Endothelial cell of umbilical vein (primary cell): ENCODE measurements at regions of chr11 and their contacts with region 1.

Region 1: GRCh38 chr11:60251485-60252212 is 8.7 kb upstream of the MS4A4E start:
- DNase-seq: peak; percentile 89
- H3K4me3 ChIP-seq: no peak overlapping the region
- H3K27ac ChIP-seq: no peak overlapping the region
- H3K4me1 ChIP-seq: peaks cover 22% of the 10 kb centered on the region
- H3K27me3 ChIP-seq: peaks cover 0 to 3% of the 10 kb centered on the region in 2 experiments
- CTCF ChIP-seq: peak; percentile 43 to 58
- POLR2A ChIP-seq: no peak

Region 2: DNA sequence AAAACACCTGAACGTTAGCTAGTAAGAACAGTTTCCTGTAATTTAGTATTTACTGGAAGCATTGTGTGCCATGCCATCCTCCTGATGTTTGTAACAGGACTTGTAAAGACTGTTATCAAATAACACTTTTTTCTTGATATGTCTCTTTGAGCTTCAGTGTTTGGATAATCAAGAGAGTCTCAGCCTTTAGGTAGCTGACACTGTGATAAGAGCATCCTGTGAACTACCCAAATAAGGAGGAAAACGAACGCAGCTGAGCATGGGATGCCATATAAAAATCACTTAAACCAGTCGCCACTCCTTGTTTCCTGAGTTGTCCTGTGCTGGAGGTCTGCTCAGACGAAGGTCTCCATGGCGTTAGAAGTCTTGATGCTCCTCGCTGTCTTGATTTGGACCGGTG is 211.5 kb before region 1 on chr11 and contains the start of gene OOSP2:
- CTCF ChIA-PET with region 1: no interaction called
- POLR2A ChIA-PET with region 1: no interaction called
- dilution Hi-C with region 1: no loop called
- intact Hi-C with region 1: no loop called
- DNase-seq: no peak
- H3K4me3 ChIP-seq: no peak within 1 kb of the TSS
- H3K27ac ChIP-seq: no peak within 1 kb of the TSS
- H3K4me1 ChIP-seq: no peaks in the 10 kb centered on the region
- H3K27me3 ChIP-seq: peaks cover 4% of the 10 kb centered on the region in 2 experiments
- CTCF ChIP-seq: no peak
- POLR2A ChIP-seq: no peak
- total RNA-seq, gene OOSP2: not detected in 2 replicates

Region 3: DNA sequence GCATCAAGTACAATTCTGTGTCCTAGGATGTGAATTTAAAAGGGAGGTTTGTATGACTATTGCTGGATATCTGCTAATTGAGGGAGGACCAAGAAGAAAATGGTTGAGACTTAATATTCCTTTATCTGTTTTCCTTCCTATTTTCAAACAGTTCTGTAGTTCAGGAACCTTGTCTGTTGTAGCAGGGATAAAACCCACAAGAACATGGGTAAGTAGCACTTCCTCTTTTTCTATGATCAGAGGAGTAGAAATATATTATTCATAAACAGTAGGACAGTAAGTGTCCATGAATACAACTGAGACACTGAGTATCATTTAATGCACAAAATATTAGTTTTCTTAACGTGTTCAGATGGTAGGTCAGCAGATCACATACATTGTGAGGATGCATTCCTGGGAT is 187.5 kb before region 1 on chr11:
- CTCF ChIA-PET with region 1: no interaction called
- POLR2A ChIA-PET with region 1: no interaction called
- dilution Hi-C with region 1: no loop called
- intact Hi-C with region 1: no loop called
- DNase-seq: no peak
- H3K4me3 ChIP-seq: no peak overlapping the region
- H3K27ac ChIP-seq: no peak overlapping the region
- H3K4me1 ChIP-seq: no peaks in the 10 kb centered on the region
- H3K27me3 ChIP-seq: peaks cover 2% of the 10 kb centered on the region in 2 experiments
- CTCF ChIP-seq: no peak
- POLR2A ChIP-seq: no peak

Region 4: GRCh38 chr11:60118338-60118737 is 133.3 kb before region 1 on chr11:
- CTCF ChIA-PET with region 1: interaction called, 35 read pairs
- POLR2A ChIA-PET with region 1: no interaction called
- dilution Hi-C with region 1: no loop called
- intact Hi-C with region 1: loop called (anchors 1 kb)
- DNase-seq: peak; percentile 63
- H3K4me3 ChIP-seq: no peak overlapping the region
- H3K27ac ChIP-seq: no peak overlapping the region
- H3K4me1 ChIP-seq: no peaks in the 10 kb centered on the region
- H3K27me3 ChIP-seq: no peaks in the 10 kb centered on the region
- CTCF ChIP-seq: peak in 1 of 2 donors; percentile 12
- POLR2A ChIP-seq: no peak

Region 5: GRCh38 chr11:60184824-60185511 is 66.7 kb before region 1 on chr11:
- CTCF ChIA-PET with region 1: interaction called, 18 read pairs
- POLR2A ChIA-PET with region 1: no interaction called
- dilution Hi-C with region 1: no loop called
- intact Hi-C with region 1: no loop called
- DNase-seq: no peak
- H3K4me3 ChIP-seq: no peak overlapping the region
- H3K27ac ChIP-seq: no peak overlapping the region
- H3K4me1 ChIP-seq: peaks cover 13% of the 10 kb centered on the region
- H3K27me3 ChIP-seq: no peaks in the 10 kb centered on the region
- CTCF ChIP-seq: no peak
- POLR2A ChIP-seq: no peak

Region 6: GRCh38 chr11:60211206-60211605 is 40.4 kb before region 1 on chr11:
- CTCF ChIA-PET with region 1: interaction called, 11 read pairs
- POLR2A ChIA-PET with region 1: no interaction called
- dilution Hi-C with region 1: no loop called
- intact Hi-C with region 1: loop called (anchors 2 kb)
- DNase-seq: no peak
- H3K4me3 ChIP-seq: no peak overlapping the region
- H3K27ac ChIP-seq: no peak overlapping the region
- H3K4me1 ChIP-seq: peaks cover 16% of the 10 kb centered on the region
- H3K27me3 ChIP-seq: no peaks in the 10 kb centered on the region
- CTCF ChIP-seq: no peak
- POLR2A ChIP-seq: no peak

Region 7: GRCh38 chr11:60345489-60345888 is 93.8 kb after region 1 on chr11:
- CTCF ChIA-PET with region 1: interaction called, 11 read pairs
- POLR2A ChIA-PET with region 1: no interaction called
- dilution Hi-C with region 1: no loop called
- intact Hi-C with region 1: no loop called
- DNase-seq: peak; percentile 54
- H3K4me3 ChIP-seq: no peak overlapping the region
- H3K27ac ChIP-seq: no peak overlapping the region
- H3K4me1 ChIP-seq: no peaks in the 10 kb centered on the region
- H3K27me3 ChIP-seq: peaks cover 25 to 26% of the 10 kb centered on the region in 2 experiments
- CTCF ChIP-seq: peak; percentile 46 to 50
- POLR2A ChIP-seq: no peak